Activated CD8-positive, alpha-beta T cell treated with anti-CD3 and anti-CD28 coated beads for 36 hours (primary cell): ENCODE measurements at regions of chr14 and their contacts with region 1.

Region 1: GRCh38 chr14:70821584-70822529 is 12.5 kb upstream of the MAP3K9 start:
- DNase-seq: peak; percentile 66
- ATAC-seq: peak; percentile 53
- H3K4me3 Mint-ChIP-seq: peak overlapping the region; percentile 73
- H3K27ac Mint-ChIP-seq: peak overlapping the region; percentile 46
- H3K4me1 Mint-ChIP-seq: peaks cover 15% of the 10 kb centered on the region
- H3K27me3 Mint-ChIP-seq: peaks cover 30% of the 10 kb centered on the region
- CTCF ChIP-seq: no peak

Region 2: DNA sequence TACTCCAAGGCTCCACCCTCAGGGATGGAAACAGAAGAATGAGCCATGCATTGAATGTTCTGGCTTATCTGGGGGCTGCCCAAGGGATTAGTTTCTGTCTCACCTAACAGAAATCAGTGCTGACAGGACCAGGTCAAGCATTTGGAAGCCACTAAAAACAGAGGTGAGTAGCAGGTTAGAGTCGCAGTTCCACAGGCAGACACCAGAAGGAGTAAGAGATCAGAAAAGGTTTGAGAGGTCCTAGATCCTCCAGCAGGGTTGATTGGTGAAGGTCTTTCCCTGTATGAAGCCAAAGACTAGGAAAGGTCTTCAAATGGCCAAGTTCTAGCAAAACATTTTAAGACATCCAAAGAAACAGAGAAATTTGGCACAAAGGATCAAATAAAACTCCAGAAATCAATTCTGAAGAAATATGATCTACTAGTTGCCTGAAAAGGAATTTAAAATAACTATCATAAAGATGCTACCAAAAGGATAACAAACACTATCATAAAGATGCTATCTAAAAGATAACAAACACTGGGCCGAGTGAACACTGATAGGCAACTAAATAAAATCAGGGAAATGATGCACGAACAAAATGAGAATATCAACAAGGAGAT is 199.6 kb before region 1 on chr14:
- CTCF ChIA-PET with region 1: interaction called, 12 read pairs
- POLR2A ChIA-PET with region 1: no interaction called
- intact Hi-C with region 1: loop called (anchors 10 kb)
- DNase-seq: peak; percentile 71
- ATAC-seq: peak; percentile 94
- H3K4me3 Mint-ChIP-seq: no peak overlapping the region
- H3K27ac Mint-ChIP-seq: no peak overlapping the region
- H3K4me1 Mint-ChIP-seq: no peaks in the 10 kb centered on the region
- H3K27me3 Mint-ChIP-seq: no peaks in the 10 kb centered on the region
- CTCF ChIP-seq: peak; percentile 83

Region 3: DNA sequence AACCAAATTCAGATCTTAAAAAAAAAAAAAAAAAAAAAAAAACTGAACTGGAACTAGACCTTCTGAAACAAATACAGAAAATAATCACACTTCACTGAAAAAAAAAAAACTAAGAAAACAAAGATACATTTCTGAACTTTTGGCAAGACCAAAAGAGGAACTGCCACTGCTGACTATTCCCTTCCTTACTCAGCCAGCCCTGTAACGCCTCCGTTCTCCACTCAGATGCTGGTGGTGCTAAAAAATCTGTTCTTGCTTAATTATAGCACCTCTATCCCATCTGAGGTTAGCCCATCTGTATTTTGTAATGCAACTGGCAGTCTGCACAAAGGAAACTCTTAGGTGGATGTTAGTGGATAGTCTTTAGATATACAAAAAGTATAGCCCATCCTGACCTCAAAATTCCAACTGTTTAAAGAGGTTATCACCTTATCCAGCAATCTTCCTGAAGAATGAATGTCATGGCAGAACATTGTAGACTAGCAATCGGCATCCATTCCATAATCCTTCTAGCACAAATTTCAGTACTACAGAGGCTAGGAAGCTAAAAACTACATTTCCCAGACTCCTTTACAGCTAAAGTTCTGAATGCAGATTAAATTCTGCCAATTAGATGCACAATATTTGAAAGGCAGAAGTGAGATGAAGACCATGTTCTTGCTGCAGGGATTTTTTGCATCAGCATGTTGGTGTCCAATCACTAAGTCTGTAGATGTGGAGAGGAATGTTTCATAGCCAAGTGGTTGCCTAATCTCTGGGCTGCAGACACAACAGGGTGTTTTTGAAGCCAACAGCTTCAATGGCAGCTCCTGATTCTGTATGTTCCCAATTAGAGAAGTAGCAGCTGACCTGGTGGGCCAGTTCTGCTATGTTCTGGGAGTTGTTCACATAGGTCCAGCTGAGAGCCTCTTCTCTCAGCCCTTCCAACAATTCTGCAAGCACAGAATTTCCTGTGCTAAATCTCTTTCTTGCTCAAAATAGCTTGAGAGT is 18.2 kb before region 1 on chr14:
- CTCF ChIA-PET with region 1: interaction called, 40 read pairs
- POLR2A ChIA-PET with region 1: interaction called, 14 read pairs
- intact Hi-C with region 1: no loop called
- DNase-seq: no peak
- ATAC-seq: no peak
- H3K4me3 Mint-ChIP-seq: no peak overlapping the region
- H3K27ac Mint-ChIP-seq: no peak overlapping the region
- H3K4me1 Mint-ChIP-seq: peaks cover 23% of the 10 kb centered on the region
- H3K27me3 Mint-ChIP-seq: no peaks in the 10 kb centered on the region
- CTCF ChIP-seq: no peak

Region 4: DNA sequence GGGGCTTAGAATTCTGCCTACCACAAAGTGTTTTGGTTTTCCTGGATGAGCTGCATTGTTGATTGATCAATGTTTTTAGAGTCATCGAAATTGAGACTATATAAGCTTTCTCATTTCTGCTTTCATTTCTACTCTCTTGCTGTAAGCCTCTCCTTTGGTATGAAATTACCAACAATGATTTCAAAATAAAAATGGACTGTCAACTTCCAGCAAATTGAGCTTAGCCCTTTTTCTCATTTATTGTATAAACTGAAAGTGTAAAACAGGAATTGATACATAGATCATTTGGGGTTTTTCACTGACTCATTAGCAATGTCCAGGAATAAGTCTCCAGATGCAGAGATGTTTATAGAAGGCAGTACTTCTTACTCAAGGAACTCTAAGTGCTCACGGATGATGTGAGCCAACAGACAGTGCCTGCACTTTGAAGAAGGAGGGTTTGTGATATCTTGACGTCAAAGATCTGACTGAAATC is 65.4 kb after region 1 on chr14:
- CTCF ChIA-PET with region 1: interaction called, 42 read pairs
- POLR2A ChIA-PET with region 1: interaction called, 21 read pairs
- intact Hi-C with region 1: no loop called
- DNase-seq: no peak
- ATAC-seq: peak; percentile 8
- H3K4me3 Mint-ChIP-seq: peak overlapping the region; percentile 50
- H3K27ac Mint-ChIP-seq: peak overlapping the region; percentile 85
- H3K4me1 Mint-ChIP-seq: peaks cover 71% of the 10 kb centered on the region
- H3K27me3 Mint-ChIP-seq: no peaks in the 10 kb centered on the region
- CTCF ChIP-seq: no peak

Region 5: DNA sequence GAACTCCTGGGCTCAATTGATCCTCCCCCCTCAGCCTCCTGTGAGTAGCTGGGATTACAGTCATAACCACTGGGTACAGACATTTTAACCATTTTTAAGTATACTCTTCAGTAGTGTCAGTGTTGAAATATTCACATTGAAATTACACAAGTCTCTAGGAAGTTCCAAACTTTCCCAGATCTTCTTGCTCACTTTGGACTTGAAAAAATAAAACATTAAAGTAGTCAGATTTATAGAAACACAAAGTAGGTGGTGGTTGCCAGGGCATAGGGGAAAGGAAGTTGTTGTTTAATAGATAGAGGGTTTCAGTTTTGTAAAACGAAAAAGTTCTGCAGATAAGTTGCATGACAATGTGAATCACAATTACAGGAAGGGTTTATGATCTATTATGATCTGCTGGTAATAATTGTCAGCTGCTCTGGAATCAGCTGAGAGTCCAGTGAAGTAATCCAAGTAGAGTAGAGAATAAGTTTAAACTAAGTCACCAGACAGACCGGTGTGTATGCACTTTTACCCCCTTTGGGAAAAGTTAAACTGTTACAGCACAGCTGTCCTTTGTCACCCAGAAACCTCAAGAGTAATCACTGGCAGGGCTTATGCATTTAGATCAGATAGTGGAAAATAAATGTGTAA is 112.8 kb after region 1 on chr14:
- CTCF ChIA-PET with region 1: interaction called, 16 read pairs
- POLR2A ChIA-PET with region 1: no interaction called
- intact Hi-C with region 1: no loop called
- DNase-seq: peak; percentile 35
- ATAC-seq: peak; percentile 90
- H3K4me3 Mint-ChIP-seq: peak overlapping the region; percentile 53
- H3K27ac Mint-ChIP-seq: peak overlapping the region; percentile 90
- H3K4me1 Mint-ChIP-seq: peaks cover 71% of the 10 kb centered on the region
- H3K27me3 Mint-ChIP-seq: no peaks in the 10 kb centered on the region
- CTCF ChIP-seq: no peak

Region 6: GRCh38 chr14:70964492-70964891 is 142.6 kb after region 1 on chr14:
- CTCF ChIA-PET with region 1: interaction called, 32 read pairs
- POLR2A ChIA-PET with region 1: no interaction called
- intact Hi-C with region 1: no loop called
- DNase-seq: no peak
- ATAC-seq: no peak
- H3K4me3 Mint-ChIP-seq: no peak overlapping the region
- H3K27ac Mint-ChIP-seq: no peak overlapping the region
- H3K4me1 Mint-ChIP-seq: peaks cover 57% of the 10 kb centered on the region
- H3K27me3 Mint-ChIP-seq: no peaks in the 10 kb centered on the region
- CTCF ChIP-seq: no peak

Region 7: GRCh38 chr14:71011479-71011878 is 189.6 kb after region 1 on chr14:
- CTCF ChIA-PET with region 1: interaction called, 10 read pairs
- POLR2A ChIA-PET with region 1: interaction called, 3 read pairs
- intact Hi-C with region 1: no loop called
- DNase-seq: no peak
- ATAC-seq: peak; percentile 37
- H3K4me3 Mint-ChIP-seq: no peak overlapping the region
- H3K27ac Mint-ChIP-seq: peak overlapping the region; percentile 13
- H3K4me1 Mint-ChIP-seq: peaks cover 33% of the 10 kb centered on the region
- H3K27me3 Mint-ChIP-seq: no peaks in the 10 kb centered on the region
- CTCF ChIP-seq: peak; percentile 52